Psoas muscle (tissue), 8 donors: ENCODE measurements at regions of chr7 and their contacts with region 1.

Region 1: DNA sequence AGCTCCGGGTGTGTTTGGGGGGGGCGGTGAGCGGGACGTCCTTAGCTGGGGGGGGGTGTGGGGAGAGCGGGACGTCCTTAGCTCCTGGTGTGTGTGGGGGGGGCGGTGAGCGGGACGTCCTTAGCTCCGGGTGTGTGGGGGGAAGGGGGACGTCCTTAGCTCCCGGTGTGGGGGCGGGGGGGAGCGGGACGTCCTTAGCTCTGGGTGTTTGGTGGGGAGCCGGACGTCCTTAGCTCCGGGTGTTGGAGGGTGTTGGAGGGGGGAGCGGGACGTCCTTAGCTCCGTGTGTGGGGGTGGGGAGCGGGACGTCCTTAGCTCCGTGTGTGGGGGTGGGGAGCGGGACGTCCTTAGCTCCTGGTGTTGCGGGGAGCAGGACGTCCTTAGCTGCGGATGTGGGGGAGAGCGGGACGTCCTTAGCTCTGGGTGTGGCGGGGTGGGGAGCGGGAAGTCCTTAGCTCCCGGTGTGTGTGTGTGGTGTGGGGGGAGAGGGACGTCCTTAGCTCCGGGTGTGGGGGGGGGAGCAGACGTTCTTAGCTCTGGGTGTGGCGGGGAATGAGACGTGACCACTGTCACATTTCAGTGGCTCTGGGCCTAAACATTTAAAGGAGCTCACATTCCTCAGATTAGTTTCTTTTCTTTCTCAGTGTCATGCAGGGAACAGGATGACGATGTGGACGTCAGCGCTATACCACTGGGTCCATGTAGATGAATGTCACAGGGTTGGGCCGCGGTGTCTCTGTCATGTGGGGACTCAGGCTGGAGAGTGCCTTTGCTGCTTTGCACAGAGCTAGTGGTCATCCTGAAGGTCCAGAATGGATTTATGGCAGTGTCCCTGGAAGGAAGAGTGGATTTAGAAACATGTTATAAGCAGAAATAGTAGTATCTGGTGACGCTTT is 7.5 kb downstream of the DYNC2I1 start:
- DNase-seq: peak; percentile 76 to 91
- ATAC-seq: peak; percentile 80 to 87 (median 84)
- H3K4me3 ChIP-seq: peak overlapping the region; percentile 63
- H3K27ac ChIP-seq: peak overlapping the region; percentile 86
- H3K4me1 ChIP-seq: peaks cover 16% of the 10 kb centered on the region
- H3K27me3 ChIP-seq: no peaks in the 10 kb centered on the region
- CTCF ChIP-seq: no peak

Region 2: DNA sequence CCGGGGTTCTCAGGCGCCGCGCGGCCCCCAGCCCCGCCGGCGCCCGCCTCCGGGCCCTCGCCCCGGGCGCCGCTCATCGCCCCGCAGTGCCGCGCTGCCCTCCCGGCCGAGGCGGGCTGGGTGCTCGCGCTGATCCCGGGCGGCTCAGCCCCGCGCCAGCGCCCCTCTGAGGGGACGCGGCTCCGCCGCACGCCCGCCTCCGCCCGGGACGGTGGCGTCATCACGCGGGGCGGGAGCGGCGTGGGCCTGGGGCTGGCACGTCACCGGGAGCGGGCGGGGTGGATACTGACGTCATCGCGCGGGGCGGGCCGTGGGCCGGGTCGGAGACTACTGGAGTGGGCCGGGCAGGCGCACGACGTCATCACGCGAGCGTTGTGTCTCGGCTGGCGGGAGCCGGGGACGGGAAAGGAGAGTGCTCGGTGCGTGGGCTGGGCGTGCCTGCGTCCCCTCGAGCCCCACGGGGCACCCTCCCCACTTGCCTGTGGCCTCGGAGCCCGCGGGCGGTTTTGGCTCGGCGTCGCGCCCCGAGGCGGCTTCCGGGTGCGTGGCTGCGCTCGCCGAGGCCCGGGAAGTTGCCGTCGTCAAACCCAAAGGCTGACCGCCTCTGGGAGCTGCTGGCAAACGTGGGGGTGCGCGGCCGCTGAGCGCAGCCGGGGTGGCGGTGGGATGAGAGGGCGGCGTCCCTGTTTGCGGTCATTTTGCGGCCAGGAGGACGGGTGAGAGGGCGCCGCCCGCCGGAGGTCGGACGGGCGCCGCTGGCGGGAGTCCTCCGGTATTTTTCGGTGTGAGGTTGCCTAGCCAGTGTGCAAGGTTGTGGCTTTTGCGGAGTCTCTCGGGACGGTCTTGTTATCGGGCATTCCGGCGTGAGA is 34.3 kb before region 1 on chr7 and contains the start of gene ESYT2:
- intact Hi-C with region 1: loop called in 1 of 2 experiments (anchors 5 kb)
- DNase-seq: peak; percentile 99 to 100
- ATAC-seq: peak; percentile 92 to 96 (median 94)
- H3K4me3 ChIP-seq: peak within 1 kb of the TSS; percentile 85
- H3K27ac ChIP-seq: peak within 1 kb of the TSS; percentile 99
- H3K4me1 ChIP-seq: peaks cover 16% of the 10 kb centered on the region
- H3K27me3 ChIP-seq: no peaks in the 10 kb centered on the region
- CTCF ChIP-seq: peak; percentile 8
- total RNA-seq, gene ESYT2: 35.9 to 63.4 (median 54.1) TPM